ENCODE measurements at regions of chr11 and their contacts with region 1.

Region 1: GRCh38 chr11:66638177-66639065 is at the start of gene RBM4:
- DNase-seq: peak; percentile 98
- CTCF ChIP-seq: no peak

Region 2: DNA sequence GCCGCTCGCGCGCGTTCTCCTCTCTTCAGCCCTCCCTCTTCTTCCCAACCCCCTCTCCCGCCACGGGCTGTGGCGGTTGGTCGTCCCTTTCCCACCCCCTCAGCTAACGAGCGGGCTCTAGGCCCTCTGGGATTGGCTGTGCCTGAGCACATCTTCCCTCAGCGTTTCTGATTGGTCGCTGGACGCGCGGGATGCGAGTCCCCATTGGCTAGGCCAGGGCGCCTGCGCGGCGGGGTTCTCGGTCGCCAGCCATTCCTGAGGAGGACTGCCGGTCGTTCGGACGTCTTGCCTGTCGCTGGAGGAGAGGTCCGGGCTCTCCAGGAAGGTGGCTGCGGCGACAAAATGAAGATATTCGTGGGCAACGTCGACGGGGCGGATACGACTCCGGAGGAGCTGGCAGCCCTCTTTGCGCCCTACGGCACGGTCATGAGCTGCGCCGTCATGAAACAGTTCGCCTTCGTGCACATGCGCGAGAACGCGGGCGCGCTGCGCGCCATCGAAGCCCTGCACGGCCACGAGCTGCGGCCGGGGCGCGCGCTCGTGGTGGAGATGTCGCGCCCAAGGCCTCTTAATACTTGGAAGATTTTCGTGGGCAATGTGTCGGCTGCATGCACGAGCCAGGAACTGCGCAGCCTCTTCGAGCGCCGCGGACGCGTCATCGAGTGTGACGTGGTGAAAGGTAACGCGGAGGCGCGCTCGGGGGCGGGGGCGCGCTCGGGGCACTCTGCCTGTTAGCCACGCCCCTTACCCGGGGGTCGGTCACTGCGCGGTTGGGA is 21.9 kb before region 1 on chr11 and contains the start of gene RBM14:
- CTCF ChIA-PET with region 1: interaction called, 11 read pairs
- POLR2A ChIA-PET with region 1: interaction called, 68 read pairs
- DNase-seq: peak; percentile 99
- CTCF ChIP-seq: no peak

Region 3: GRCh38 chr11:66625041-66625751 is 13.2 kb before region 1 on chr11:
- CTCF ChIA-PET with region 1: interaction called, 22 read pairs
- POLR2A ChIA-PET with region 1: interaction called, 68 read pairs
- DNase-seq: no peak
- CTCF ChIP-seq: no peak

Region 4: GRCh38 chr11:66651016-66651415 is 12.6 kb after region 1 on chr11:
- CTCF ChIA-PET with region 1: interaction called, 10 read pairs
- POLR2A ChIA-PET with region 1: interaction called, 11 read pairs
- DNase-seq: no peak
- CTCF ChIP-seq: no peak

Measured in GM10248 (cell line).